ENCODE measurements at regions of chr13 and their contacts with region 1.

Region 1: DNA sequence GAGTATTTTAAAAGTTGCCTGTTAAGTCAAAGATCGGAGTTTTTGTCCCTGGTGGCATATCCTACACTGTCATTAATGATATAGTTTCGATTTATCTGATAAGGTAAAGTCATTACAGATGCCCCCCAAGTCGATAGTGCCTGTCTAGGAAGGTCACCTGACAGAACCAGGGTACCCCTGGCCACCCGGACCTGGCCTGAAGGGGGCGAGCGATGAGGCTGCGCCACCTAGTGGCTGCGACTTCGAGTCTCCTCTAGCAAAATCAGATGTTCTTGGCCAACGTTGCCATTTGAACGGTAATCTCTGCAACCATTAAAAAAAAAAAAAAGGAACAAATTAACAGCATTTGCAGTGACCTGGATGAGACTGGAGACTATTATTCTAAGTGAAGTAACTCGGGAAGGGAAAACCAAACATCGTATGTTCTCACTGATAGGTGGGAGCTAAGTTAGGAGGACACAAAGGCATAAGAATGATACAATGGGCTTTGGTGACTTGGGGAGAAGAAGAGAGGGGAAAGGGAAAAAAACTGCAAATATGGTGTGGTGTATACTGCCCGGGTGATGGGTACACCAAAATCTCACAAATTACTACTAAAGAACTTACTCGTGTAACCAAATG is 565.1 kb downstream of the LIG4 start:
- DNase-seq: peak; percentile 77
- H3K4me3 ChIP-seq: no peak overlapping the region
- H3K27ac ChIP-seq: no peak overlapping the region
- H3K4me1 ChIP-seq: no peaks in the 10 kb centered on the region
- H3K27me3 ChIP-seq: no peaks in the 10 kb centered on the region

Region 2: GRCh38 chr13:106523566-106523965 is 1126.6 kb before region 1 on chr13:
- in situ Hi-C with region 1: no loop called
- DNase-seq: no peak
- H3K4me3 ChIP-seq: no peak overlapping the region
- H3K27ac ChIP-seq: no peak overlapping the region
- H3K4me1 ChIP-seq: no peaks in the 10 kb centered on the region
- H3K27me3 ChIP-seq: no peaks in the 10 kb centered on the region; the same call in 1 of the 2 replicates

Region 3: DNA sequence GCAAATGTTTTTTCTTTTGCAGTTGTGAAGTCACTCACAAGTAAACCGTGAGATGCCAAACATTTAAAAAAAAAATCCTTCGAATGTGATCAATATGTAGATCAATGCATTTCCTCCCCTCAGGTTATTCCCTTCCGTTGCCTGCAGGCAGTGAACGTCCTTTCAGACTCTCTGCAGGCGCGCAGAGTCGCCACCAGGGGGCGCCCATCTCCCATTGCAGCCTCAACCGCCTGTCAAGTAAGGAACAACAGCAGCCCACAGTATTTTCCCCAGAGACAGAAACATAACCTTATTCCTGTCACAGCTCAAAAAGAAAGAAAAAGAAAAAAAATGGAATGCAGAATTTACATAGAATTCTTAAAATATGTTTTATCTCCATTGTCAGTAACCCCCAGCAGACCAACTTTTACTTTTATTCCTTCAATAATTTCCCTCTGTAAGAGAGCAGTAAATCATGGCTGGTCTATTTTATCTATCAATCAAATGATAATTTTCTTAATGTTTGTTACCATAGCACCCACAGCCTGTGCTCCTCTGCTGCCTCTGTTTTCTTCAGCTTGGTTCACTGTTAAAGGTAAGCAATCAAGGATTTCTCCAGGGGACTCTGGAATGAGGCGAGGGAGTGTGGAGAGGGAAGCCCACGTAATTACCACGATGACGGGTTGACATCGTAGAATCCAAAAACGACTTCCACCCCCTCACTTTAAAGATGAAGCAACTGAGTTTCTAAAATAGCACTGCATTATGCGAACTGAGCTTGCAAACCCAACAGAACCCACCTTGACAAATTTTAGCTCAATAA is 444.7 kb before region 1 on chr13:
- in situ Hi-C with region 1: loop called (anchors 10 kb)
- DNase-seq: peak; percentile 73
- H3K4me3 ChIP-seq: no peak overlapping the region
- H3K27ac ChIP-seq: no peak overlapping the region
- H3K4me1 ChIP-seq: peaks cover 16% of the 10 kb centered on the region
- H3K27me3 ChIP-seq: no peaks in the 10 kb centered on the region

Region 4: DNA sequence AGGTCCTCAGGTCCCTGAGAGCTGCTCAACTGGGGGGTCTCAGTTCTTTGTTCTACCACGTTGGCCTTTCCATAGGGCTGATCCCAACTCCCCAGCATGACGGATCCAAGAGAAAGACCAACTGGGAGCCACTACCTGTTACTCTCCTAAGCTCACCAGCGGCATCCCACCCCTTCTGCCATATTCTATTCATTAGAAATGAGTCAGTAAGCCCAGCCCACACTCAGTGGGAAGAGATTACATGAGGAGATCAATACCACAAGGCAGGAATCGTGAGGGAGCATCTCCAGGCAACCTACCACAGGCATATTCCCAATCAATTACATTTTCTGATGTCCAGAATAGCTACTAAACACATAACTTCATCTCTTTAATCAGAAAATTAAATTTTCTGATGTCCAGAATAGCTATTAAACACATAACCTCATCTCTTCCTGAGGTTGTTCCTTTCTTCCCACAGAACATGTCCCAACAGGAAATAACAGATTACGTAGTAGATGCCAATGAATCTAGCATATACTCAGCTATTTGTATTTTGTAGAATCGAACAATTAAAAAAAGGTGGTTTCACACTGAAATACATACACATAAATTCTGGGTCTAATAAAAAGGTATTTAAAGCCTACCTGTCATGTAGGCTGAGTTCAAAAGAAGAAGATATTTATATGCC is 374.1 kb before region 1 on chr13:
- in situ Hi-C with region 1: no loop called
- DNase-seq: peak; percentile 48
- H3K4me3 ChIP-seq: no peak overlapping the region
- H3K27ac ChIP-seq: peak overlapping the region; percentile 71; the same call in 1 of the 2 replicates
- H3K4me1 ChIP-seq: peaks cover 34% of the 10 kb centered on the region
- H3K27me3 ChIP-seq: no peaks in the 10 kb centered on the region

Region 5: DNA sequence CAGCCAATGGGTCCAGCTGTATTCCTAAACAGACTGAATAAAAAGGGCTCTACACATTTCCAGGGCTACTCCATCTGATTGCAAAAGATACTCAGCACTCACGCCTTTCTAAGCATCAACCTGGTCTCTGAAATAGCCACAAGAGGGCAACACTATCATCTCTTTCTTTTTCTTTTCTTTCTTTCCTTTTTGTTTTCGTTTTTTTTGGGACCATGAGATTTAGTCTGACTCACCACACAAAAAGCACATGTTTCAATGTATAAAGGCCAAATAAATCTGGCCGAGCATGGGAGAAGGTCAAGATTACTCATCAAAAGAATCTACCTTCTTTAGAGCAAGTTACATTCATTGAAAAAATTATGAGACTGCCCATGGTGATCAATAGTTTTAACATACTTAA is 276.6 kb before region 1 on chr13:
- in situ Hi-C with region 1: loop called (anchors 10 kb)
- DNase-seq: peak; percentile 92
- H3K4me3 ChIP-seq: no peak overlapping the region
- H3K27ac ChIP-seq: no peak overlapping the region
- H3K4me1 ChIP-seq: peaks cover 49% of the 10 kb centered on the region
- H3K27me3 ChIP-seq: no peaks in the 10 kb centered on the region

Region 6: DNA sequence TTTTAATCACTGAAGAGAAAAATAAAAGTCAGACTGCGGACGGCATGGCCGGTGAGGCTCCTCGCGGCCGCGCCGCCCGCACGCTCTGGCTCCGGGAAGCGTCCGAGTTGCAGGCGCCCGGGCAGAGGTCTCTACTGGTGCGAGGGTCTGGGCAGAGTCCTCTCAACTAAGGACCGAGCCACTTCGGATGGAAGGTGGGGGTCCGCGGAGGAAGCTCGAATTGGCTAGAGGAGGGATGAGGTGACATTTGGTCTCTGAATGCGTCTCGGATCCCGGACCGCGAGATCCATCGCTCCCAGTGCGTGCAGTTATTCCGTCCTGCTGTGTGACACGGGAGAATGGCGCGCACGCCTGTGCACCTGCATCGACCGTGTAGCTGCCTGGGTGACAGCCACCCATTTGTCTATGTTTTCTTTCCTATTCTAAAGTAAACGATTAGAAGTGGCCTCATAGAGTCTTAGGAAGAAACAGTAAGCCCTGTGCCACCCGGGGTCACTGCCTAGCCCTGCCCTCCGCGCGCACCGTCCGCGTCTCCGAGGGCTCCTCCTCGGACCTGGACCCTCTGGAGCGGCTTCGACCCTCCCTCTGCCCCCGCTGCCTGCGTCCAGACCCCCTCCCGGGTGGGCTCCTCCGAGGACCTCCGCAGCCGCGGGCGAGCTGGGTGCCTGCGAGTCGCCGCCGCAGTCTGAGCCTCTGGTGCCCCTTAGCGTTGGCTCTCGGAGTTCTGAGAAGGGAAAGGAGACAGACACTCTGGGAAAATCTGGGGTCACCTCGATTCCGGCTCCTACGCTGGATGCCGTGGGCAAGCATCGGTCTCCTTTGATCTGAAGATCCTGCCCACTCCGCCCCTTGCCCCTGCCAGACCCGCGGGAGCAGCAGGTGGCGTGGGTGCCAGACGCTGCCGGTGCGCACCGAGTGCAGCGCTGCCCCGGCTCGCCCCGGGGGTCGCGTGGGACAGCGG is 217.8 kb after region 1 on chr13:
- in situ Hi-C with region 1: loop called (anchors 25 kb)
- DNase-seq: peak; percentile 84
- H3K4me3 ChIP-seq: peak overlapping the region; percentile 98
- H3K27ac ChIP-seq: peak overlapping the region; percentile 74
- H3K4me1 ChIP-seq: peaks cover 19% of the 10 kb centered on the region
- H3K27me3 ChIP-seq: no peaks in the 10 kb centered on the region

Measured in GM23248 (cell line).